ENCODE measurements at regions of chr21 and their contacts with region 1.

Region 1: DNA sequence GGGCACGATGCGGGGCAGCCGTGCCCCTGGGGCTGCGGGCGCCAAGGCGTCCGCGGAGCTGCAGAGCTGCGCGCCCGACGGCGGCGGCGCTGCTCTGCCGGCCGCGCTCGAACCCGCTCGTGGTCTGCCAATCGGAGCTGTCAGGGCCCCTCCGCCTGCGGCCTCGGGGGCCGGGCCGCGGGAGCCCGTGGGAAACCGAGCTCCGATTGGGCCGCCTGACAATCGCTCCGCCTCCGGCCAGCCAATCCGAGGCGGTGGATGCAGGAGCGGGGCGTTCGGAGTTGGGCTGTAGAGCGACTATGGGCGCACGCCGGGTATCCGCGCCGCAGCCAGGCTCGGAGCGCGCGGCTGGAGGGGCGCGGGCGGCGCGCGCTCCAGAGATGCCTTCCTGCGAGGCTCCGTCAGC is 100.5 kb upstream of the SOD1 start:
- DNase-seq: peak; percentile 97
- ATAC-seq: peak; percentile 88
- H3K4me3 Mint-ChIP-seq: peak overlapping the region; percentile 80
- H3K27ac Mint-ChIP-seq: no peak overlapping the region
- H3K4me1 Mint-ChIP-seq: peaks cover 34% of the 10 kb centered on the region
- H3K27me3 Mint-ChIP-seq: peaks cover 24% of the 10 kb centered on the region

Region 2: GRCh38 chr21:31132574-31133242 is 426.3 kb before region 1 on chr21:
- CTCF ChIA-PET with region 1: no interaction called
- POLR2A ChIA-PET with region 1: interaction called, 3 read pairs
- intact Hi-C with region 1: loop called in 1 of 2 experiments (anchors 2 kb)
- DNase-seq: peak; percentile 84
- ATAC-seq: peak; percentile 75
- H3K4me3 Mint-ChIP-seq: peak overlapping the region; percentile 43
- H3K27ac Mint-ChIP-seq: peak overlapping the region; percentile 92
- H3K4me1 Mint-ChIP-seq: peaks cover 60% of the 10 kb centered on the region
- H3K27me3 Mint-ChIP-seq: no peaks in the 10 kb centered on the region

Region 3: GRCh38 chr21:31293986-31294385 is 265.0 kb before region 1 on chr21:
- CTCF ChIA-PET with region 1: interaction called, 4 read pairs
- POLR2A ChIA-PET with region 1: no interaction called
- intact Hi-C with region 1: loop called in 1 of 2 experiments (anchors 1 kb)
- DNase-seq: peak; percentile 85
- ATAC-seq: peak; percentile 94
- H3K4me3 Mint-ChIP-seq: no peak overlapping the region
- H3K27ac Mint-ChIP-seq: peak overlapping the region; percentile 79
- H3K4me1 Mint-ChIP-seq: peaks cover 47% of the 10 kb centered on the region
- H3K27me3 Mint-ChIP-seq: no peaks in the 10 kb centered on the region

Region 4: GRCh38 chr21:31335957-31336738 is 222.8 kb before region 1 on chr21:
- CTCF ChIA-PET with region 1: interaction called, 3 read pairs
- POLR2A ChIA-PET with region 1: interaction called, 6 read pairs
- intact Hi-C with region 1: loop called in 1 of 2 experiments (anchors 2 kb)
- DNase-seq: peak; percentile 70
- ATAC-seq: peak; percentile 81
- H3K4me3 Mint-ChIP-seq: no peak overlapping the region
- H3K27ac Mint-ChIP-seq: peak overlapping the region; percentile 71
- H3K4me1 Mint-ChIP-seq: peaks cover 73% of the 10 kb centered on the region
- H3K27me3 Mint-ChIP-seq: no peaks in the 10 kb centered on the region

Region 5: GRCh38 chr21:31490443-31490842 is 68.5 kb before region 1 on chr21:
- CTCF ChIA-PET with region 1: no interaction called
- POLR2A ChIA-PET with region 1: no interaction called
- intact Hi-C with region 1: no loop called
- DNase-seq: peak; percentile 12
- ATAC-seq: peak; percentile 65
- H3K4me3 Mint-ChIP-seq: no peak overlapping the region
- H3K27ac Mint-ChIP-seq: no peak overlapping the region
- H3K4me1 Mint-ChIP-seq: no peaks in the 10 kb centered on the region
- H3K27me3 Mint-ChIP-seq: no peaks in the 10 kb centered on the region

Region 6: GRCh38 chr21:31580866-31581276 is 21.9 kb after region 1 on chr21:
- CTCF ChIA-PET with region 1: interaction called, 14 read pairs
- POLR2A ChIA-PET with region 1: no interaction called
- intact Hi-C with region 1: no loop called
- DNase-seq: peak; percentile 87
- ATAC-seq: peak; percentile 85
- H3K4me3 Mint-ChIP-seq: no peak overlapping the region
- H3K27ac Mint-ChIP-seq: no peak overlapping the region
- H3K4me1 Mint-ChIP-seq: no peaks in the 10 kb centered on the region
- H3K27me3 Mint-ChIP-seq: peaks cover 3% of the 10 kb centered on the region

Measured in activated CD4-positive, alpha-beta T cell treated with anti-CD3 and anti-CD28 coated beads for 36 hours (primary cell).